Activated T-helper 1 cell treated with anti-CD3 and anti-CD28 coated beads, Interleukin-12 subunit alpha, Interleukin-12 subunit beta, Interleukin-2, Interleukin-4 antibody, amounts not matched to agents 30 ng/mL and 10 ng/mL and 1 ng/mL, durations not matched to agents 14 hours and 24 hours and 36 hours (primary cell): ENCODE measurements at regions of chr20 and their contacts with region 1.

Region 1: GRCh38 chr20:10596726-10597125 is 77.1 kb downstream of the JAG1 start:
- DNase-seq: no peak
- H3K4me3 Mint-ChIP-seq: no peak overlapping the region
- H3K27ac Mint-ChIP-seq: no peak overlapping the region
- H3K4me1 Mint-ChIP-seq: peaks cover 11% of the 10 kb centered on the region
- H3K27me3 Mint-ChIP-seq: peaks cover 2% of the 10 kb centered on the region

Region 2: DNA sequence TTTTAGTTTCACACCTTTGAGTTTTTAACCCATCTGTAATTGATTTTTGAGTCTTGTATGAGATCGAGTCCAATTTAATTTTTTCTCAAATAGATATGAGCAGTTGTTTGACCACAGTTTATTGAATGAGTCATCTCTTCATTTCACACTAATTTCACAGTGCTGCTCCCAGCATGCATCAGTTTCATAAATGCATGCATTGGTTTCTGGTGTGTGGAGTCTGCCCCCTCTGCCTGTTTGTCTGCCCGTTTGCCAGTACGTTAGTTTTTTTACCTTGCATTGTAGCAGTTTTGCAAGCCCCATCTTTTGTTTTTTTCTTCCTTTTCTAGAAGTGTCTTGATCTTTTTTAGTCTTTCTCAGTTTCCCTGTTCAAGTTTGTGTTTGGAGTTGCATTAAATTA is 149.7 kb before region 1 on chr20:
- intact Hi-C with region 1: loop called (anchors 2 kb)
- DNase-seq: peak; percentile 27
- H3K4me3 Mint-ChIP-seq: peak overlapping the region; percentile 55
- H3K27ac Mint-ChIP-seq: peak overlapping the region; percentile 70
- H3K4me1 Mint-ChIP-seq: peaks cover 21% of the 10 kb centered on the region
- H3K27me3 Mint-ChIP-seq: no peaks in the 10 kb centered on the region

Region 3: DNA sequence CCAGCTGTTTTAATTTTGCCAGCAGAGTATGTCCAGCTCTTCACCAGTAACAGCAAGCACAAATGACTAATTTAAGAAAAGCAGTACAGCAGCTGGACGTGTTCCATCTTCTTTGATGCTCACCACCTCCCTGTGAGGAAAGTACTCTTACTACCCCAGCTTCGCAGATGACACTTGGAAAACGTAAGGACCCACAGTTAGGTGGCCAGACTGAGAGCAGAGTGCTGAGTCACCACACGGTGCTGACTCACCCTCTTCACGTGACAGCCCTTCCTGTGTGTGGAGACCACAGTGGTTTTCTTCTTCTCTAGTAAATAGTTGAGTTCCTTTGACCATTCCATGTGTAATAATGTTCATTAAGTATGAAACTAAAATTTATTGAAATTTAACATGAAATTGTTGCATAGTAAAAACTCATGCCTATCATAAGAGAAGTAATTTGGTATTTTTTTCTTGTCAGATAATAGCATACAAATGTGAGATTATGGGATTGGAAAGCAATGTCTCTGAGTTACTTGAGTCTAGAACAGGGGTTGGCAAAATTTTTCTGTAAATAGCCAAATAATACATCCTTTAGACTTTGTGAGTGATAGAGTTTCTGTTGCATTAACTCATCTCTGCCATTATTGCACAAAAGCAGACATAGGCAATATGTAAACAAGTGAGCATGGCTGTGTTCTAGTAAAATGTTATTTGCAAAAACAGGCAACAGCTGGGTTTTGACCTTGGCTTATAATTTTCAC is 85.0 kb before region 1 on chr20:
- intact Hi-C with region 1: loop called (anchors 2 kb)
- DNase-seq: peak; percentile 70
- H3K4me3 Mint-ChIP-seq: peak overlapping the region; percentile 36
- H3K27ac Mint-ChIP-seq: peak overlapping the region; percentile 64
- H3K4me1 Mint-ChIP-seq: peaks cover 44% of the 10 kb centered on the region
- H3K27me3 Mint-ChIP-seq: no peaks in the 10 kb centered on the region

Region 4: DNA sequence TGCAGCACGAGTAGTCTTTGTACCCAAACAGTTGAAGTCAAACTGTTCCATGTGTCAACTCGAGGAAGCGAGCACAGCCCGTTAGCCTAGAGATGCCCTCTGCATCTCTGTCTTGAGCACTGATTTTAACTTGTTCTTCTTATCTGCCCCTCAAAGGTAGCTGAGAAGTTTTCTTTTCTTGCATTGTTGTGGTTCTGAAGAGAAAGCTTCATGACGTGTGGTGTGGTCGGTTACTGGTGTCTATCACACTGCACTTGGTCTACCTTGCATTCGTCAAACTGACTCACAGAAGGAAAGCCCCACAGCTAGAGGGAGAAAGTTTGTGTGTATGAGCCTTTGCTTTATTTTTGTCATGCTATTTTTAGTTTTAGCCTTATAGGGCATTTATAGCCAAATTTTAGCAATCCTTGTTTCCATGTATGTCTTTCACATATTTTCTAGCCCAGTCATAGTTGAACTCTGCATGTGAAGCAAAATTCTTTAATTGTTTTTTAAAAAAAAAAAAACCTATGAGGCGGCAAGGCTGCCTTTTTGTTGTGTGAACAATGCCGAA is 38.0 kb before region 1 on chr20:
- intact Hi-C with region 1: loop called (anchors 1 kb)
- DNase-seq: peak; percentile 53
- H3K4me3 Mint-ChIP-seq: no peak overlapping the region
- H3K27ac Mint-ChIP-seq: peak overlapping the region; percentile 61
- H3K4me1 Mint-ChIP-seq: peaks cover 36% of the 10 kb centered on the region
- H3K27me3 Mint-ChIP-seq: no peaks in the 10 kb centered on the region

Region 5: DNA sequence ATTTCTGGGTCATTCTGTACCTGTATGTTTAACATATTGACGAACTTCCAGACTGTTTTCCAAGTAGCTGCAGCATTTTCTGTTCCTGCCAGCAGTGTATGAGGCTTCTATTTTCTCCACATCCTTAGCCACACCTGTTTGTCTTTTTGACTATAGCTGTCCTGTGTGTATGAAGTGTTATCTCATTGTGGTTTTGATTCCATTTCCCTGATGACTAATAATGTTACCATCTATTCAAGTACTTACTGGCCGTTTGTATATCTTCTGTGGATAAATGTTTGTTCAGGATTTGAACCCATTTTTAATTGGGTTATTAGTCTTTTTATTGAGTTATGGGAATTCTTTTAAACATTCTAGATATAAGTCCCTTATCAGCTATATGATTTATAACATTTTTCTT is 18.1 kb before region 1 on chr20:
- intact Hi-C with region 1: loop called (anchors 2 kb)
- DNase-seq: no peak
- H3K4me3 Mint-ChIP-seq: no peak overlapping the region
- H3K27ac Mint-ChIP-seq: no peak overlapping the region
- H3K4me1 Mint-ChIP-seq: peaks cover 25% of the 10 kb centered on the region
- H3K27me3 Mint-ChIP-seq: peaks cover 3% of the 10 kb centered on the region

Region 6: GRCh38 chr20:10622657-10623418 is 26.1 kb after region 1 on chr20:
- intact Hi-C with region 1: no loop called
- DNase-seq: no peak
- H3K4me3 Mint-ChIP-seq: no peak overlapping the region
- H3K27ac Mint-ChIP-seq: no peak overlapping the region
- H3K4me1 Mint-ChIP-seq: no peaks in the 10 kb centered on the region
- H3K27me3 Mint-ChIP-seq: no peaks in the 10 kb centered on the region

Region 7: GRCh38 chr20:10654630-10655029 is 57.9 kb after region 1 on chr20:
- intact Hi-C with region 1: loop called (anchors 5 kb)
- DNase-seq: no peak
- H3K4me3 Mint-ChIP-seq: no peak overlapping the region
- H3K27ac Mint-ChIP-seq: no peak overlapping the region
- H3K4me1 Mint-ChIP-seq: peaks cover 6% of the 10 kb centered on the region
- H3K27me3 Mint-ChIP-seq: peaks cover 13% of the 10 kb centered on the region